ENCODE measurements at regions of chr6 and their contacts with region 1.

Region 1: DNA sequence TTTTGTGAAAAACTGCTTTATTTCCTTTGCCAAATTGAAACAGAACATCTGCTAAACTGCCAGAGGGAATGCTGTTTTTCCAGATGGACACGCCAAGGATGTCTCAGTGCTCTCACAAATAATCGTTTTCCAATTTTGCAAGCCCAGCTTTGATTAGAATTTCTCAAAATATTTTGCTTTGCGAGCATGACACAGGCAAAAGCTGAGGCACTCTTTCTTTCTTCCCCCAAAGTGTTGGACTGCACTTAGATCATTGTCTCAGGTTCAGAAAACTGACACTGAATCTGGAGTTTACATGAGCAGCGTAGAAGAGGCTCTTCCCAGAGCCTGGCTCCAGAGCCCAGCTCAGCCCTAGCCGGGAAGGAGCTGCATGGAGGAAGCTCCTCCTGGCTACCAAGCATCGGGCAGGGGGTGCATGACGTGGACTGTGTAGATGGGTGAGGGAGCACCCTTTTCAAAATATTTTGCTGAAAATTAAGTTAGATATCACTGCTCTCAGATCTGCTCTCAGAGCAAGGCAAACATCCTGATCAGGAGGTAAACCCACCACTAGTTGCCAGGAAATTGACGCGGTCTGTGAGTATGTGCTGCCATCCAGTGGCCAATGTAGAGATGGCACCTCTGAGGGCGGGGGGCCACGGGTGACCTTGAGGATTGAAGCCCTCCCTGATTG is 107.5 kb downstream of the SLC22A3 start:
- DNase-seq: peak; percentile 46 to 92
- H3K4me3 ChIP-seq: no peak overlapping the region
- CTCF ChIP-seq: peak in 1 of 3 donors; percentile 85
- POLR2A ChIP-seq: no peak

Region 2: DNA sequence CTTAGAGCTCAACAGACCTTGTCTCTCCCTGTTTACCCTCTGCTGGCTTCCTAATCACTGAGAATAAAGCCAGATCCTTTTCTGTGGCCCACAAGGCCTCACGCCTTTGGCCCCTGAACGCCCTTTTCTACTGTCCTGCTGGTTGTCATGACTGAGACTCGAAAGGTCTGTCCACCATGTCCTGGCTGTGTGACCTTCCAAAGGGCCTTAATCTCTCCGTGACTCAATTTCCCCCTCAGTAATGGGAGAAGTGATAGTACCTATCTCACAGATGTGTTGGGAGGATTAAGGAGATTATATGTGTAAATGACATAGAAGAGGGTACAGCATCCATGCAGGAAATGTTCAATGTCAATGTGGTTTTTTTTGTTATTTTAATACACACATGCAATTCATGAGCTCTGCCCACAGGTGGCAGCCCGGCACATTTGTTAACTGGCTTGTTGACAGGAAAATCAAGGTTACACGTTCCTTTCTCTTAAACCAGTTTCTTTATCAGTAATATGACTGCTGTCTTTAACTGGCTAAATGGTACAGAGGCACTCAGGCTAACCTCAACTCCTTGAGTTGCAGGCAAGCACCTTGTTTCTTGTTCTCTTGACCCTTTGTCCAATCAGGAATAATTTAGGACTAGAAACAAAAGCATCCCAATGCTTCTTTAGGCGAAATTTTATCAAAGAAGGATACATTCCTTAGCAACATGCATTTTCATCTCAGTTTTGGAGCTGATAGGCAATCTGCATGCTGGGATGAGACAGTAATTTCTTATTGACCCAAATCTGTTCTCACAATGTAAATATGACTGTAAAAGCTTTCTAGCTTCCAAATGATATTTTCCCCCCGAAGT is 317.5 kb before region 1 on chr6:
- intact Hi-C with region 1: loop called (anchors 10 kb)
- DNase-seq: peak in 1 of 2 donors; percentile 85
- H3K4me3 ChIP-seq: no peak overlapping the region
- CTCF ChIP-seq: no peak
- POLR2A ChIP-seq: no peak

Region 3: GRCh38 chr6:160221423-160221822 is 234.3 kb before region 1 on chr6:
- intact Hi-C with region 1: loop called (anchors 10 kb)
- DNase-seq: no peak
- H3K4me3 ChIP-seq: no peak overlapping the region
- CTCF ChIP-seq: no peak
- POLR2A ChIP-seq: no peak

Region 4: GRCh38 chr6:160315310-160315709 is 140.4 kb before region 1 on chr6:
- intact Hi-C with region 1: no loop called
- DNase-seq: no peak
- H3K4me3 ChIP-seq: no peak overlapping the region
- CTCF ChIP-seq: no peak
- POLR2A ChIP-seq: no peak

Region 5: DNA sequence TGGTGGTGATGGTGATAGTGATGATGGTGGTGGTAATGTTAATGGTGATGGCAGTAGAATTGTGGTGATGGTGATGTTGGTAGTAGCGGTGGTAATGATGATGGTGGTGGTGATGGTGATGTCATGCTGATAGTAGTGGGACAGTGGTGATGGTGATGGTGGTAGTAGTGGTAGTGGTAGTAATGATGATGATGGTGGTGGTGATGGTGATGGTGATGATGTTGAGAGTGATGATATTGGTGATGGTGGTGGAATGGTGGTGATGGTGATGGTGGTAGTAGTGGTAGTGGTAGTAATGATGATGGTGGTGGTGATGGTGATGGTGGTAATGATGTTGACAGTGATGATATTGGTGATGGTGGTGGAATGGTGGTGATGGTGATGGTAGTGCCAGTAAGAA is 79.6 kb after region 1 on chr6:
- intact Hi-C with region 1: loop called (anchors 1 kb)
- DNase-seq: no peak
- H3K4me3 ChIP-seq: no peak overlapping the region
- CTCF ChIP-seq: no peak
- POLR2A ChIP-seq: no peak